IMR-90 (cell line): ENCODE measurements at regions of chr3 and their contacts with region 1.

Region 1: GRCh38 chr3:12135029-12135657 is 23.6 kb downstream of the TIMP4 start:
- DNase-seq: peak; percentile 64
- ATAC-seq: peak; percentile 97
- H3K4me3 ChIP-seq: no peak overlapping the region
- H3K27ac ChIP-seq: no peak overlapping the region
- H3K4me1 ChIP-seq: no peaks in the 10 kb centered on the region
- H3K27me3 ChIP-seq: peaks cover 24% of the 10 kb centered on the region
- CTCF ChIP-seq: peak; percentile 91
- POLR2A ChIP-seq: no peak
- RAD21 ChIP-seq: peak; percentile 97

Region 2: GRCh38 chr3:12175844-12176453 is 40.8 kb after region 1 on chr3:
- CTCF ChIA-PET with region 1: interaction called, 10 read pairs
- POLR2A ChIA-PET with region 1: no interaction called
- dilution Hi-C with region 1: no loop called
- in situ Hi-C with region 1: loop called (anchors 5 kb)
- intact Hi-C with region 1: loop called (anchors 1 kb)
- DNase-seq: peak; percentile 50
- ATAC-seq: peak; percentile 92
- H3K4me3 ChIP-seq: no peak overlapping the region
- H3K27ac ChIP-seq: no peak overlapping the region
- H3K4me1 ChIP-seq: peaks cover 12% of the 10 kb centered on the region
- H3K27me3 ChIP-seq: no peaks in the 10 kb centered on the region
- CTCF ChIP-seq: peak; percentile 77
- POLR2A ChIP-seq: no peak
- RAD21 ChIP-seq: peak; percentile 88

Region 3: GRCh38 chr3:12308517-12308916 is 173.4 kb after region 1 on chr3:
- CTCF ChIA-PET with region 1: no interaction called
- POLR2A ChIA-PET with region 1: no interaction called
- dilution Hi-C with region 1: no loop called
- in situ Hi-C with region 1: no loop called
- intact Hi-C with region 1: loop called (anchors 5 kb)
- DNase-seq: peak; percentile 93
- ATAC-seq: peak; percentile 67
- H3K4me3 ChIP-seq: no peak overlapping the region
- H3K27ac ChIP-seq: peak overlapping the region; percentile 99; the same call in 1 of the 2 replicates
- H3K4me1 ChIP-seq: peaks cover 9% of the 10 kb centered on the region
- H3K27me3 ChIP-seq: no peaks in the 10 kb centered on the region
- CTCF ChIP-seq: no peak
- POLR2A ChIP-seq: no peak
- RAD21 ChIP-seq: no peak

Region 4: GRCh38 chr3:12508291-12508700 is 373.2 kb after region 1 on chr3:
- CTCF ChIA-PET with region 1: no interaction called
- POLR2A ChIA-PET with region 1: no interaction called
- dilution Hi-C with region 1: no loop called
- in situ Hi-C with region 1: no loop called
- intact Hi-C with region 1: loop called (anchors 1 kb)
- DNase-seq: peak; percentile 100
- ATAC-seq: peak; percentile 96
- H3K4me3 ChIP-seq: no peak overlapping the region
- H3K27ac ChIP-seq: peak overlapping the region; percentile 81
- H3K4me1 ChIP-seq: peaks cover 12% of the 10 kb centered on the region
- H3K27me3 ChIP-seq: no peaks in the 10 kb centered on the region
- CTCF ChIP-seq: no peak
- POLR2A ChIP-seq: no peak
- RAD21 ChIP-seq: no peak

Region 5: GRCh38 chr3:12578742-12579141 is 443.6 kb after region 1 on chr3:
- CTCF ChIA-PET with region 1: no interaction called
- POLR2A ChIA-PET with region 1: no interaction called
- dilution Hi-C with region 1: no loop called
- in situ Hi-C with region 1: no loop called
- intact Hi-C with region 1: loop called (anchors 5 kb)
- DNase-seq: no peak
- ATAC-seq: no peak
- H3K4me3 ChIP-seq: no peak overlapping the region
- H3K27ac ChIP-seq: no peak overlapping the region
- H3K4me1 ChIP-seq: peaks cover 25% of the 10 kb centered on the region
- H3K27me3 ChIP-seq: no peaks in the 10 kb centered on the region
- CTCF ChIP-seq: peak; percentile 25; the same call in 1 of the 2 replicates
- POLR2A ChIP-seq: no peak
- RAD21 ChIP-seq: 0 out of 2 replicates have a peak, but pooled peaks have one; percentile 5